SK-N-SH (cell line): ENCODE measurements at regions of chr14 and their contacts with region 1.

Region 1: GRCh38 chr14:61837336-61838229 is 75.4 kb downstream of the SNAPC1 start:
- DNase-seq: peak; percentile 65
- H3K4me3 ChIP-seq: no peak overlapping the region; a peak in 1 of 4 replicates
- H3K27ac ChIP-seq: no peak overlapping the region
- H3K4me1 ChIP-seq: peaks cover 0 to 3% of the 10 kb centered on the region in 2 experiments; a peak in 3 of 4 replicates
- H3K27me3 ChIP-seq: no peaks in the 10 kb centered on the region
- CTCF ChIP-seq: peak; percentile 93
- EP300 ChIP-seq: no peak
- RAD21 ChIP-seq: peak; percentile 99

Region 2: GRCh38 chr14:61296719-61297502 is 540.7 kb before region 1 on chr14:
- CTCF ChIA-PET with region 1: interaction called, 15 read pairs
- POLR2A ChIA-PET with region 1: no interaction called
- DNase-seq: peak; percentile 34
- H3K4me3 ChIP-seq: peak overlapping the region in 1 of 2 experiments; percentile 14; a peak in 1 of 4 replicates
- H3K27ac ChIP-seq: no peak overlapping the region
- H3K4me1 ChIP-seq: no peaks in the 10 kb centered on the region
- H3K27me3 ChIP-seq: no peaks in the 10 kb centered on the region
- CTCF ChIP-seq: peak; percentile 86
- EP300 ChIP-seq: no peak
- RAD21 ChIP-seq: peak; percentile 76

Region 3: GRCh38 chr14:61475316-61475715 is 362.3 kb before region 1 on chr14:
- CTCF ChIA-PET with region 1: interaction called, 17 read pairs
- POLR2A ChIA-PET with region 1: no interaction called
- DNase-seq: no peak
- H3K4me3 ChIP-seq: no peak overlapping the region
- H3K27ac ChIP-seq: peak overlapping the region in 1 of 2 experiments; percentile 97; a peak in 2 of 4 replicates
- H3K4me1 ChIP-seq: peaks cover 14 to 66% of the 10 kb centered on the region in 2 experiments
- H3K27me3 ChIP-seq: no peaks in the 10 kb centered on the region
- CTCF ChIP-seq: peak; percentile 84
- EP300 ChIP-seq: peak in 1 of 2 experiments; percentile 25; a peak in 1 of 4 replicates
- RAD21 ChIP-seq: peak; percentile 68

Region 4: DNA sequence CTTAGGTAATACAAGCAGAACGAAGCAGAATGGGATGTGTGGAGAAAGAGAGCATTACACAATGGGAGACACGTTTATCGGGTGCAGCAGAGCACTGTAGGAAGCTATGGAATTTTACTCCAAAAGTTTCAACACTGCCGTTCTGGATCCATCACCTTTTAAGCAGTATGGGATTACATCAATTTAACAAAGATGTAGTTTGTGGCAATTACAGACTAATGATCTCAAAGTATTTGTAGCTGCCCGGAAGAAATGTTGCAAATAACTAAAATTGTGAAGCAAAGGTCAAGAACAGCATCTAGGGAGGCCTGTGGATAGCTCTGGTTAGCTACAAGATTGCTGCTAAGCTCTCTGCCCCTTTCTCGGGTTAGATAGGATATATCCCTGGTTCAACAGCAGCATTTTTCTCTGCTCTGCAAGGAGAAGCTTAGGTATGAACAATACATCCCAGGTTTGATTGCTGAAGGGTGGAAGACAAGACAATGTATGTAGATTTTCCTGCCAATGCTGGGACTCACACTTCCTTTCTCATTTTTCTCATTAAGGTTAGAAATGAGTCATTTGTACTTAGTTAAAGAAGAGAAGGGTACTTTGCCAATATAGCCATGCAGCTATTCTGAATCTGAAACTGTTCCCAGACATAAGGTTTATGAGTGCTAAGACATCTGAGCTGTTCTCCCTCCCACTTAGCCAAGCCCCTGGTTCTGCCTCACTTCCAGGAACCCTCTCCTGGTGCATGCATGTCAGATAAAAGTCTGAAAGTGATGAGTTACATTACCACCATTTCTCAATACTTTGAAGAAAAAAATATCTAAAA is 217.2 kb before region 1 on chr14:
- CTCF ChIA-PET with region 1: no interaction called
- POLR2A ChIA-PET with region 1: no interaction called
- DNase-seq: no peak
- H3K4me3 ChIP-seq: no peak overlapping the region
- H3K27ac ChIP-seq: peak overlapping the region; percentile 56 to 64
- H3K4me1 ChIP-seq: peaks cover 10 to 16% of the 10 kb centered on the region in 2 experiments
- H3K27me3 ChIP-seq: no peaks in the 10 kb centered on the region
- CTCF ChIP-seq: no peak
- EP300 ChIP-seq: no peak
- RAD21 ChIP-seq: 0 out of 2 replicates have a peak, but pooled peaks have one; percentile 1

Region 5: GRCh38 chr14:61730756-61731373 is 106.7 kb before region 1 on chr14:
- CTCF ChIA-PET with region 1: interaction called, 13 read pairs
- POLR2A ChIA-PET with region 1: no interaction called
- DNase-seq: no peak
- H3K4me3 ChIP-seq: no peak overlapping the region
- H3K27ac ChIP-seq: peak overlapping the region; percentile 16 to 66
- H3K4me1 ChIP-seq: peaks cover 0 to 4% of the 10 kb centered on the region in 2 experiments; a peak in 1 of 4 replicates
- H3K27me3 ChIP-seq: no peaks in the 10 kb centered on the region
- CTCF ChIP-seq: peak; percentile 76
- EP300 ChIP-seq: no peak
- RAD21 ChIP-seq: peak; percentile 76

Region 6: DNA sequence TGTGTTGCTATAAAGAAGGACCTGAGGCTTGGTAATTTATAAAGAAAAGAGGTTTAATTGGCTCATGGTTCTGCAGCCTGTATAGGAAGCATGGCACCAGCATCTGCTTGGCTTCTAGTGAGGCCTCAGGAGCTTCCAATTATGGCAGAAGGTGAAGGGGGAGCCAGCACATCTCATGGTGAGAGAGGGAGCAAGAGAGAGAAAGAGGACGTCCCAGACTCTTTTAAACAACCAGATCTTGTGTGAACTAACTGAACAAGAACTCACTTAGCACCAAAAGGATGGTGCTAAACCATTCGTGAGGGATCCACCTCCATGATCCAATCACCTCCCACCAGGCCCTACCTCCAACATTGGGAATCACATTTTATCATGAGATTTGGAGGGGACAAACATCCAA is 81.4 kb before region 1 on chr14:
- CTCF ChIA-PET with region 1: interaction called, 16 read pairs
- POLR2A ChIA-PET with region 1: no interaction called
- DNase-seq: no peak
- H3K4me3 ChIP-seq: no peak overlapping the region
- H3K27ac ChIP-seq: no peak overlapping the region
- H3K4me1 ChIP-seq: peaks cover 4 to 11% of the 10 kb centered on the region in 2 experiments; a peak in 2 of 4 replicates
- H3K27me3 ChIP-seq: no peaks in the 10 kb centered on the region
- CTCF ChIP-seq: no peak
- EP300 ChIP-seq: no peak
- RAD21 ChIP-seq: no peak

Region 7: DNA sequence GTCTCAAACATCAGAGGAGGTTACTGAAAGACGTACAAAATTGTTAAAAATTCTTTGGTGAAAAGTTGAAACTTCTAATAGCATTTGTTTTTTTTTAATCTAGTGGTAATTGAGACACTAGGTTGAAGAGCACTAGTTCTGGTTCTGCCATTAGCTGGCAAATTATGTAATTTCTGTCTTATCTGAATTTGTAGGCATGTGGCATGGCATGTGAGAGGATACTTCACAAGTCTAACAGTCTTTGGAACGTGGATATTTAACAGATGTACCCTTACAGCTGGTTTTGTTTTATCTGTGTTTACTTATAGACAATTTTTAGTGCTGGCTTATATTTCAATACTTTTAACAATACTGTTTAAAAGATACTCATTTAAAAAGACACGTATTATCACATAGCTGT is 69.3 kb before region 1 on chr14:
- CTCF ChIA-PET with region 1: interaction called, 18 read pairs
- POLR2A ChIA-PET with region 1: no interaction called
- DNase-seq: peak; percentile 57
- H3K4me3 ChIP-seq: no peak overlapping the region
- H3K27ac ChIP-seq: peak overlapping the region in 1 of 2 experiments; percentile 53; a peak in 1 of 4 replicates
- H3K4me1 ChIP-seq: peaks cover 10 to 15% of the 10 kb centered on the region in 2 experiments; a peak in 3 of 4 replicates
- H3K27me3 ChIP-seq: no peaks in the 10 kb centered on the region
- CTCF ChIP-seq: no peak
- EP300 ChIP-seq: peak in 1 of 2 experiments; percentile 80; a peak in 2 of 4 replicates
- RAD21 ChIP-seq: no peak

Region 8: GRCh38 chr14:62117010-62117750 is 279.6 kb after region 1 on chr14:
- CTCF ChIA-PET with region 1: interaction called, 10 read pairs
- POLR2A ChIA-PET with region 1: no interaction called
- DNase-seq: peak; percentile 91
- H3K4me3 ChIP-seq: peak overlapping the region; percentile 37 to 57
- H3K27ac ChIP-seq: no peak overlapping the region
- H3K4me1 ChIP-seq: peaks cover 0 to 6% of the 10 kb centered on the region in 2 experiments; a peak in 1 of 4 replicates
- H3K27me3 ChIP-seq: peaks cover 33% of the 10 kb centered on the region
- CTCF ChIP-seq: peak; percentile 30
- EP300 ChIP-seq: no peak
- RAD21 ChIP-seq: no peak; the same call in 1 of the 2 replicates